ENCODE measurements at regions of chr9 and their contacts with region 1.

Region 1: GRCh38 chr9:38068866-38069629 is at the start of gene SHB:
- DNase-seq: peak; percentile 68
- H3K4me3 Mint-ChIP-seq: peak within 1 kb of the TSS; percentile 64
- H3K27ac Mint-ChIP-seq: no peak within 1 kb of the TSS
- H3K4me1 Mint-ChIP-seq: peaks cover 25% of the 10 kb centered on the region
- H3K27me3 Mint-ChIP-seq: peaks cover 33% of the 10 kb centered on the region
- total RNA-seq, gene SHB: 1.7 and 1.9 TPM in 2 replicates

Region 2: DNA sequence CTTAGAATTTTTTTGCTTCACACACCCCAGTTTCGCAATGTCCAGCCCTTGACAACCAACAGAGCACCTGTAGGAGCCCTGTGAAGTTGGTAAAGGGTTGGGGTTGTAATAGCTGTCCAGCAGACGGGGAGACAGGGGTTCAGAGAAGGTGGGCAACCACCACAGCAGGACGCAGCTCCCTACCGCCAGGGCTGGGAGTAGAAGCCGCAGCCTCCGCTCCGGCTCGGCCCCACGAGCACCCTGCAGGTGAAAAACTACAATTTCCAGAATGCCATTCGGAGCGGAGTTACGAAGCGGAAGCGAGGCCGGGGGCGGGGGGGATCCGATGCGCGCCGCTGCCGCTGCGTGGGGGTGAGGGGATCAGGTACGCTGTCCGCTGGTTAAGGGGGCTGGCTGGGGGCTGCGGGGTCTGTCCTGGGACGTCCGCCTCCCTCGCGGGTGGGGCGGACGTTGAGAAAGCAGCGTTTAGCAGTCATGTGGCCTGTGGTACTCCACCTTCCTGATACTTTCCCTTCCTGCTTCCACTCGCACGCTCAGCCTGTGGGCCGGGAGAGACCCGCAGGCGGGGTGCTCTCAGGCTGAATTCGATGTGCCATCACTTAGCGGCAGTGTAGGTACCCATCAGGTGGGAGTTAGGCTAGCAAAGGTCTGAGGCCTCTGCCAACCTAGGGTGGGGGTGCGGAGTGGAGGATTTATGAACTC is 315.4 kb before region 1 on chr9 and contains the start of gene TRMT10B:
- intact Hi-C with region 1: loop called (anchors 5 kb)
- DNase-seq: peak; percentile 61
- H3K4me3 Mint-ChIP-seq: peak within 1 kb of the TSS; percentile 97
- H3K27ac Mint-ChIP-seq: peak within 1 kb of the TSS; percentile 91
- H3K4me1 Mint-ChIP-seq: peaks cover 17% of the 10 kb centered on the region
- H3K27me3 Mint-ChIP-seq: no peaks in the 10 kb centered on the region
- total RNA-seq, gene TRMT10B: 11.8 and 12.1 TPM in 2 replicates

Region 3: DNA sequence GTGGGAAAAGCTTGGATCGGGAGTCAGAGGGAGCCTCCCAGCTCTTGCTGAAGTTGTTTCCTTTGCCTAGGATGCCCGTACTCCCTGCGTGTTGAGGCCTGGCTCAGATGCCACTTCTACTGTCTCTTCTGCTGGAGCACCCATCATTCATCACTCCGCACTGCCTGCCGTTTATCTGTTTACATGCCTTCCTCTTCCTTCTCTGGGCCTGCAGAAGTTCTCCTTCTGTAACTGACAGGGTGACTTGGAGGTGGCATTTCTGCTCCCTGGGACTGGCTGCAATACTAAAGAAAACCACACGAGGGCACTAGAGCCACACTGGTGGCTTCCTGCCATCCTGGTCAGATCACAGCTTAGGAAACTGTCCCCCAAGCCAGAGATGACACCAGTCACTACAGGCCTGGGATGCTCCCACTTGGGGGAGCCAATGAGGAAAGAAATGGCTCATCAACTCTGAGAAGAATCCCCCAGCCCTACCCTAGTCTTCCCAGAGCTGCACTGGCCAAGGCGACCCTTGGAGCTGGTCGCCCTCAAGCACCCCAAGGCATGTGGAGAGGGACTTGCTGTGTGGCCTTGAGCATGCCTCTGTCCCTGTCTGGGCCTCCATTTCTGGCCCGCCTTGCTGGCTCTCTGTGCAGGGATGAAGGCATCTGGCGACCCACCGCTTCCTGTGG is 155.4 kb before region 1 on chr9:
- intact Hi-C with region 1: loop called (anchors 1 kb)
- DNase-seq: peak; percentile 71
- H3K4me3 Mint-ChIP-seq: no peak overlapping the region
- H3K27ac Mint-ChIP-seq: no peak overlapping the region
- H3K4me1 Mint-ChIP-seq: peaks cover 2% of the 10 kb centered on the region
- H3K27me3 Mint-ChIP-seq: no peaks in the 10 kb centered on the region

Region 4: GRCh38 chr9:37953775-37954437 is 115.1 kb before region 1 on chr9:
- intact Hi-C with region 1: loop called (anchors 2 kb)
- DNase-seq: no peak
- H3K4me3 Mint-ChIP-seq: peak overlapping the region; percentile 22
- H3K27ac Mint-ChIP-seq: peak overlapping the region; percentile 96
- H3K4me1 Mint-ChIP-seq: peaks cover 30% of the 10 kb centered on the region
- H3K27me3 Mint-ChIP-seq: no peaks in the 10 kb centered on the region

Region 5: DNA sequence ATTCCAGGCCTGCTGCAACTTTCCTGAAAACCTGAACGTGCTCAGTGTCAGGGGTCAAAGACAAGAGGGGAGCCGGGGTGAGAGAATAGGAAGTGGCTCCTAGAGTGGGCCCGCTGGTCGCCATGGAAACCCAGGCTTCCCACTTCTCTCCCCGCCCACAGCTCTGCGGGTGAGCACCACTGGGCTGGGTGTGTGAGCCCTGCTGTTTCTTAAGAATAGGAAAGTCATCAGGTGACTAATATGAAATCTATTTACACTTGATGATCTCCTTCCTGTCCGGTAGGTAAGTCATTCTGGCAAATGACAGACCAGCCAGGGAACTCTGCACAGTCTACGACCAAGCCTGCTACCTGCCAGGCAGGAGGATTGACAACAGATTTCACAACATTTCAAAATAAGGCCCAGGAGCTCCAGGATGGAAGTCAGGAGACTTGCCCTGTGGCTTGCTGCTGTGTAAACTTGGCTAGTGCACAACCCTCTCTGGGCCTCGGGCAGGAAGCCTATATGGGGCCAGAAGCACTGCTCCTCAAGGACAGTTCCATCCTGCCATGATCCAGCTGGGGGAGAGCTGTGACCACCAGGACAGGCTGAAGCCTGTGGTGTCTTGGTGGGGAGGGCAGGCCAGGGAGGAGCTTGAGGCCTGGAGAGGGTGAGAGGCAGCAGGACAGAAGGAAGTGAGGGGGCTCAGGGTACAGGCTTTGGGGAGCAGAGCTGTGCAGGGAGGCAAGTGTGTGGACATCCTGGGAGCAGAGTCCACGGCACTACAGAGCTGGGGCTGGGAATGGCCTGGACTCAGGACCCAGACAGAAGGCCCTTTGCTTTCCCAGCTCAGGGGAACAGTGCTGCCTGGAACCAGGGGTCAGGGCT is 60.6 kb before region 1 on chr9:
- intact Hi-C with region 1: loop called (anchors 10 kb)
- DNase-seq: no peak
- H3K4me3 Mint-ChIP-seq: peak overlapping the region; percentile 45
- H3K27ac Mint-ChIP-seq: peak overlapping the region; percentile 93
- H3K4me1 Mint-ChIP-seq: peaks cover 29% of the 10 kb centered on the region
- H3K27me3 Mint-ChIP-seq: no peaks in the 10 kb centered on the region

Region 6: GRCh38 chr9:38233343-38233742 is 164.3 kb after region 1 on chr9:
- intact Hi-C with region 1: no loop called
- DNase-seq: no peak
- H3K4me3 Mint-ChIP-seq: no peak overlapping the region
- H3K27ac Mint-ChIP-seq: no peak overlapping the region
- H3K4me1 Mint-ChIP-seq: peaks cover 1% of the 10 kb centered on the region
- H3K27me3 Mint-ChIP-seq: peaks cover 4% of the 10 kb centered on the region

Region 7: DNA sequence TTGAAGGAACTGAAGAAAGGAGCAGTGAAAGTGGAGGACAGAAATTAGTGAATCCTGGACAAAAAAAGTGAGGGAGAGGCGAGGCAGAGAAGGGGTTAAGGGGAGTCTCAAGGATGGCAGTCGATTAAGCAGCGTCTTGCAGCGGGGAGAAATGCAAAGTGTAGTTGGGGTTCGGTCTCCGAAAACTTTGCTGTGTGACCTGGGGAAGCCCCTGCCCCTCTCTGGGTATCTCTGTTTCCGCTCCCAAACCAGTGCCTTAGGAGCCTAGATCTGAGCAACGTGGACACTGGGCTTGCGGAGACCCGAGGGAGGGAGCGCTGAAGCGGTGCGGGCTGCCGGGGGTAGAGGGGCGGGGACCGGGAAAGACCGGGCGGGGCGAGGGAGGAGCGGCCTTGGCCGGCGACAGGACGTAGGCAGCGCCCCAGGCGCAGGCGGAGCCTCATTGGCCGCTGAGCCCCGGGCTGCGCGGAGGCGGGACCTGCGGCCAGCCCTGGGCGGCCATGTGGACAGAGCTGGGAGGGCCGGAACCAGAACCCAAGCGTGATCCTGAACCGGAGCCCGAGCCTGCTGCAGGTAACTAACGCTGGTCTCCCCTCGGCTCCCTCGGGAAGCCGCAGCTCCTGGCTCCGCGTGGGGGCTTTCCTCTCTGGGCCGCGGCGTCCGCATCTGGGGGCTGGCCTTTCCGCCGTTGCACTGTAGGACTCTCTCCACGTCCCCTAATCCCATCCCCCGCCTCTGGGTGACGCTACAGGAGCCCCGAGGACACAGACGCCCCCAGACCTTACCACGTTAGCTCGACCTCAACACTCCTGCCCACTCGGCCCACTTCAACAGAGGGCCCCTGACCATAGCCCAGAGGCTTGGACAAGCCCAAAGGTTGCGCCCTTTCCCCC is 323.4 kb after region 1 on chr9 and contains the start of gene ALDH1B1:
- intact Hi-C with region 1: loop called (anchors 10 kb)
- DNase-seq: peak; percentile 70
- H3K4me3 Mint-ChIP-seq: peak within 1 kb of the TSS; percentile 96
- H3K27ac Mint-ChIP-seq: peak within 1 kb of the TSS; percentile 90
- H3K4me1 Mint-ChIP-seq: peaks cover 16% of the 10 kb centered on the region
- H3K27me3 Mint-ChIP-seq: peaks cover 22% of the 10 kb centered on the region
- total RNA-seq, gene ALDH1B1: 37.7 and 39.3 TPM in 2 replicates